OCI-LY7 (cell line): ENCODE measurements at regions of chr21 and their contacts with region 1.

Region 1: GRCh38 chr21:42973991-42974831 is at the start of gene PKNOX1:
- DNase-seq: peak; percentile 100
- H3K4me3 ChIP-seq: peak within 1 kb of the TSS; percentile 73
- H3K27ac ChIP-seq: peak within 1 kb of the TSS; percentile 51
- H3K4me1 ChIP-seq: peaks cover 28% of the 10 kb centered on the region
- CTCF ChIP-seq: no peak
- total RNA-seq, gene PKNOX1: 23.7 and 25.5 TPM in 2 replicates

Region 2: GRCh38 chr21:42581993-42582786 is 392.0 kb before region 1 on chr21:
- CTCF ChIA-PET with region 1: no interaction called
- POLR2A ChIA-PET with region 1: no interaction called
- intact Hi-C with region 1: no loop called
- DNase-seq: no peak
- H3K4me3 ChIP-seq: no peak overlapping the region
- H3K27ac ChIP-seq: no peak overlapping the region
- H3K4me1 ChIP-seq: no peaks in the 10 kb centered on the region
- CTCF ChIP-seq: no peak

Region 3: DNA sequence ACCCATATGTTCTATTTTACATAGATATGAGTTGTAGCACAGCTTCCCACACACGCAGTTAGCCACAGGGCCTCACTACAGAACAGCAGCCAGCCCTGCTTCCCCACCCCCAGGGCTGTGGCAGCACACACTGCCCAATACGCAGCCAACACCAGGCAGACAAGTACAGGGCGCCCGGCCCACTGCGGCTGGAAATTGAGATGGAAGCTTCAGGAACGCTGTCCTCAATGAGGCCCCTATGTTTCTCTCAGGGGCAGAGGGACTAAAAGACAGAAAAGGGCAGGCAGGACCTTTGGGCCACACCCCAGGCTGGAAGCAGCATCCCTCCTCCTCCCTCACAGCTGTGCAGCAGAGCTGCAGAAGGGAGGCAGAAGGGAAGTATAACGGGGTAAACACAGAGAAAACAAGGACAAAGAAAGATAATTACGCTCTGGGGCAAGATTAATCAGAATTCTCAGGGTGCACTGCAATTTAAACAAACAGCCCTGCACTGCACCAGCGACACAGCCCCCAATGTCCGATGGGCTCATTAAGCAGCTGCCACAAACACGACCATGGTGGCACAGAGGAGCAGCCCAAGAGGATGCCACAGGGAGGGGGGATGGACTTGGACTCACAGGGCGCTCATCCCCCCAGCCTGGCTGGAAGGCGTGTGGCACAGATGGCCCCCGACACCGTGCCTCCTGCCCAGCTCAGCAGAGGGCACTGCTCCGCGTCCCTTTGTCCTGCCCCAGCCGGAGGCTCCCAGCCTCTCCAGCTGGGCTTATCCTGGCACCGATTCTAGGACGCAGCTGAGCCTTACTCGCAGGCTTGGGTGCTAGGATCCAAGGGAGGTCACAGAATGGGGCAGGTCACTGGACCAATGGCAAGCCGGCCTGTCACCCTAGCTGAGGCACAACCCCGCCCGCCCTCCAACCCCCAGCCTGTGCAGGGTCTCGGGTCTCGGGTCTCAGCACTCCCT is 109.1 kb before region 1 on chr21:
- CTCF ChIA-PET with region 1: no interaction called
- POLR2A ChIA-PET with region 1: no interaction called
- intact Hi-C with region 1: no loop called
- DNase-seq: no peak
- H3K4me3 ChIP-seq: no peak overlapping the region
- H3K27ac ChIP-seq: no peak overlapping the region
- H3K4me1 ChIP-seq: no peaks in the 10 kb centered on the region
- CTCF ChIP-seq: no peak

Region 4: DNA sequence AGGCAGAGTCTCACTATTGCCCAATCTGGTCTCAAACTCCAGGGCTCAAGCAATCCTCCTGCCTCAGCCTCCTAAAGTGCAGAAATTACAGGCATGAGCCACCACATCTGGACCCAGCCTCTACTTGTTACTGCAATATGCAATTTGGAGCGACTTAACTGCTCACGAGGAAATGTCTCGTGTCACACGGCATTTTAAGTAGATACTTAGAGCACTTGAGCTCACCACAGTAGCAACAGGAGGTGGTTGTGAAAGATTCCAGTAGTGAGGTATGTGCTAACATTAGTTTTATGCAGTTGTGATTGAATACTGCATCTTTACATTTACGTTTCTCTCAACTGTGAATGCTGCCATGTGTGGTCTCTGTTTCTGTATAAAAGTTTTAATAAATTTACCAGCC is 86.9 kb before region 1 on chr21:
- CTCF ChIA-PET with region 1: no interaction called
- POLR2A ChIA-PET with region 1: no interaction called
- intact Hi-C with region 1: loop called (anchors 10 kb)
- DNase-seq: no peak
- H3K4me3 ChIP-seq: no peak overlapping the region
- H3K27ac ChIP-seq: no peak overlapping the region
- H3K4me1 ChIP-seq: peaks cover 7% of the 10 kb centered on the region
- CTCF ChIP-seq: no peak

Region 5: GRCh38 chr21:42997053-42997452 is 22.8 kb after region 1 on chr21:
- CTCF ChIA-PET with region 1: no interaction called
- POLR2A ChIA-PET with region 1: no interaction called
- intact Hi-C with region 1: no loop called
- DNase-seq: no peak
- H3K4me3 ChIP-seq: no peak overlapping the region
- H3K27ac ChIP-seq: no peak overlapping the region
- H3K4me1 ChIP-seq: peaks cover 2% of the 10 kb centered on the region
- CTCF ChIP-seq: no peak